Psoas muscle (tissue), 8 donors: ENCODE measurements at regions of chr15 and their contacts with region 1.

Region 1: GRCh38 chr15:73560501-73561117 is 72.6 kb downstream of the NPTN start:
- DNase-seq: no peak
- ATAC-seq: peak in 3 of 4 donors; percentile 54 to 83 (median 74)
- H3K4me3 ChIP-seq: no peak overlapping the region
- H3K27ac ChIP-seq: no peak overlapping the region
- H3K4me1 ChIP-seq: no peaks in the 10 kb centered on the region
- H3K27me3 ChIP-seq: no peaks in the 10 kb centered on the region
- CTCF ChIP-seq: peak; percentile 59

Region 2: GRCh38 chr15:73156431-73157191 is 404.0 kb before region 1 on chr15:
- intact Hi-C with region 1: no loop called
- DNase-seq: no peak
- ATAC-seq: no peak
- H3K4me3 ChIP-seq: no peak overlapping the region
- H3K27ac ChIP-seq: no peak overlapping the region
- H3K4me1 ChIP-seq: peaks cover 28% of the 10 kb centered on the region
- H3K27me3 ChIP-seq: no peaks in the 10 kb centered on the region
- CTCF ChIP-seq: no peak

Region 3: GRCh38 chr15:73633111-73633990 is 72.7 kb after region 1 on chr15 and contains the start of gene NPTN:
- intact Hi-C with region 1: loop called (anchors 1 to 2 kb)
- DNase-seq: peak; percentile 99 to 100
- ATAC-seq: peak; percentile 96 to 98 (median 97)
- H3K4me3 ChIP-seq: peak within 1 kb of the TSS; percentile 85
- H3K27ac ChIP-seq: peak within 1 kb of the TSS; percentile 81
- H3K4me1 ChIP-seq: peaks cover 42% of the 10 kb centered on the region
- H3K27me3 ChIP-seq: no peaks in the 10 kb centered on the region
- CTCF ChIP-seq: no peak
- total RNA-seq, gene NPTN: 28.8 to 40.8 (median 32.6) TPM

Region 4: GRCh38 chr15:73639464-73640188 is 79.0 kb after region 1 on chr15:
- intact Hi-C with region 1: loop called (anchors 1 to 2 kb)
- DNase-seq: no peak
- ATAC-seq: no peak
- H3K4me3 ChIP-seq: no peak overlapping the region
- H3K27ac ChIP-seq: no peak overlapping the region
- H3K4me1 ChIP-seq: no peaks in the 10 kb centered on the region
- H3K27me3 ChIP-seq: no peaks in the 10 kb centered on the region
- CTCF ChIP-seq: no peak

Region 5: GRCh38 chr15:73697033-73697467 is 136.4 kb after region 1 on chr15:
- intact Hi-C with region 1: loop called (anchors 2 to 5 kb)
- DNase-seq: peak; percentile 85 to 91
- ATAC-seq: peak; percentile 82 to 93 (median 90)
- H3K4me3 ChIP-seq: no peak overlapping the region
- H3K27ac ChIP-seq: peak overlapping the region; percentile 76
- H3K4me1 ChIP-seq: peaks cover 48% of the 10 kb centered on the region
- H3K27me3 ChIP-seq: no peaks in the 10 kb centered on the region
- CTCF ChIP-seq: no peak

Region 6: GRCh38 chr15:73800662-73801345 is 240.2 kb after region 1 on chr15:
- intact Hi-C with region 1: no loop called
- DNase-seq: peak; percentile 60 to 93
- ATAC-seq: peak; percentile 73 to 91 (median 89)
- H3K4me3 ChIP-seq: no peak overlapping the region
- H3K27ac ChIP-seq: peak overlapping the region; percentile 56
- H3K4me1 ChIP-seq: peaks cover 53% of the 10 kb centered on the region
- H3K27me3 ChIP-seq: no peaks in the 10 kb centered on the region
- CTCF ChIP-seq: no peak

Region 7: DNA sequence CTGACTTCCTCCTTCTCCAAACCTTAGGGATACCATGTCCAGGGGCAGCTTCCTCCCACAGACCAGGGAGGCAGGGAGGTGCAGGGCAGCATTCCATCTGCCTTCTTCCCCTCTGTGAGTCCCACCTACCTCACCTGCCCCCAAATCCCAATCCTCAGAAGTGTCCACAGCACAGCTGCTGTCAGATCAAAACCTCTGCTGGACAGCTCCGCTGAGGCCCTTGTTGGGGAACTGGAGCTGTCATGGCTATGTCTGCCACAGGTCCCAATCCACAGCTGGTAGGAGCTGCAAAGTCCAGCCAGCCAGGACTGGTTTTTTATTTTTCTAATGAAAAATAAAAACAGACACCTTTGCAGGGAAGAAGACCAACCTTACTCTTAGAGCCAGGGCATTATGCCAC is 272.0 kb after region 1 on chr15:
- intact Hi-C with region 1: no loop called
- DNase-seq: no peak
- ATAC-seq: no peak
- H3K4me3 ChIP-seq: no peak overlapping the region
- H3K27ac ChIP-seq: no peak overlapping the region
- H3K4me1 ChIP-seq: peaks cover 6% of the 10 kb centered on the region
- H3K27me3 ChIP-seq: no peaks in the 10 kb centered on the region
- CTCF ChIP-seq: no peak

Region 8: GRCh38 chr15:73914145-73914544 is 353.5 kb after region 1 on chr15:
- intact Hi-C with region 1: loop called in 1 of 2 experiments (anchors 10 kb)
- DNase-seq: no peak
- ATAC-seq: no peak
- H3K4me3 ChIP-seq: no peak overlapping the region
- H3K27ac ChIP-seq: no peak overlapping the region
- H3K4me1 ChIP-seq: no peaks in the 10 kb centered on the region
- H3K27me3 ChIP-seq: peaks cover 0 to 4% (median 0%) of the 10 kb centered on the region in 3 donors
- CTCF ChIP-seq: no peak